Dendritic cell treated with granulocyte-macrophage colony-stimulating factor and Interleukin-4, amounts not matched to agents 40 ng/mL and 50 ng/mL, for 4 days (primary cell): ENCODE measurements at regions of chr2 and their contacts with region 1.

Region 1: DNA sequence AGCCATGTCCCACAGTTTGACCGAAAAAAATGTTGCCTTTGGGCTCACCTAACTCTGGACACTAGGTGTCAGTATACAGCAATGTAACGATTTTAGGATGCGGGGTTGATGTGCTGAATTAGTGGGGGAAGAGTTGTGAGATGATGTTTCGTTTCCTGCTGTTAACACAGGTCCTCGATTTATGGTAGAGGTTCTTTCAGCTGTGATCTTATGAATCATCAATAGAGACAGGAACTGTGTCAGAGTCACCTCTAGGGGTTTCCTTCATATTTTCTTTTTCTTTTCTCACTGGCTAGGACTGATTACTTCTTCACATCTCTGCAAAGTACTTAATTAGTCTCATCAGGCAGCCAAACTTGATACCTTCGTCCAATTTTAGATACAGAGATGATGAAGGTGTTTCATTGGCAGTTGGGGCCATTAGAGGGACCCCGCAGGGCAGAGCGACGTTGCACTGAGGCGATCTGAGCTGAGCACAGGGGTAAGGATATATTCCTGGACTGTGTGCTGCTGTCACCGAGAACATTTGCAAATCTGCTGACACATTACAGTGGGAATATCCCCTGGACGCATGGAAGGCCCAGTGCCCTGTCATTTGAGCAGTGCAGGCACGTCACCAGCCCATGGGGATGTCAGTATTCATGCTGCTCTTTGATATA is 10.2 kb upstream of the MMADHC start:
- H3K4me3 Mint-ChIP-seq: no peak overlapping the region
- H3K27ac Mint-ChIP-seq: no peak overlapping the region
- H3K4me1 Mint-ChIP-seq: peaks cover 16% of the 10 kb centered on the region
- H3K27me3 Mint-ChIP-seq: peaks cover 9% of the 10 kb centered on the region

Region 2: GRCh38 chr2:149383340-149383739 is 214.5 kb before region 1 on chr2:
- intact Hi-C with region 1: no loop called
- H3K4me3 Mint-ChIP-seq: no peak overlapping the region
- H3K27ac Mint-ChIP-seq: no peak overlapping the region
- H3K4me1 Mint-ChIP-seq: no peaks in the 10 kb centered on the region
- H3K27me3 Mint-ChIP-seq: no peaks in the 10 kb centered on the region

Region 3: GRCh38 chr2:150487537-150488429 is 890.0 kb after region 1 on chr2 and contains the start of gene RND3:
- intact Hi-C with region 1: loop called (anchors 1 kb)
- H3K4me3 Mint-ChIP-seq: peak within 1 kb of the TSS; percentile 49
- H3K27ac Mint-ChIP-seq: no peak within 1 kb of the TSS
- H3K4me1 Mint-ChIP-seq: peaks cover 16% of the 10 kb centered on the region
- H3K27me3 Mint-ChIP-seq: peaks cover 45% of the 10 kb centered on the region

Region 4: GRCh38 chr2:151051574-151052220 is 1453.9 kb after region 1 on chr2:
- intact Hi-C with region 1: loop called (anchors 1 kb)
- H3K4me3 Mint-ChIP-seq: no peak overlapping the region
- H3K27ac Mint-ChIP-seq: no peak overlapping the region
- H3K4me1 Mint-ChIP-seq: peaks cover 1% of the 10 kb centered on the region
- H3K27me3 Mint-ChIP-seq: peaks cover 2% of the 10 kb centered on the region

Region 5: GRCh38 chr2:151238527-151239487 is 1641.0 kb after region 1 on chr2:
- intact Hi-C with region 1: loop called (anchors 2 kb)
- H3K4me3 Mint-ChIP-seq: no peak overlapping the region
- H3K27ac Mint-ChIP-seq: no peak overlapping the region
- H3K4me1 Mint-ChIP-seq: peaks cover 6% of the 10 kb centered on the region
- H3K27me3 Mint-ChIP-seq: no peaks in the 10 kb centered on the region